ENCODE measurements at regions of chr6 and their contacts with region 1.

Region 1: GRCh38 chr6:85008296-85009009 is 244.1 kb upstream of the TBX18 start:
- DNase-seq: no peak
- ATAC-seq: peak in 1 of 8 donors; percentile 37
- H3K4me3 ChIP-seq: no peak overlapping the region
- H3K27ac ChIP-seq: no peak overlapping the region
- H3K4me1 ChIP-seq: no peaks in the 10 kb centered on the region
- H3K27me3 ChIP-seq: no peaks in the 10 kb centered on the region
- CTCF ChIP-seq: no peak

Region 2: DNA sequence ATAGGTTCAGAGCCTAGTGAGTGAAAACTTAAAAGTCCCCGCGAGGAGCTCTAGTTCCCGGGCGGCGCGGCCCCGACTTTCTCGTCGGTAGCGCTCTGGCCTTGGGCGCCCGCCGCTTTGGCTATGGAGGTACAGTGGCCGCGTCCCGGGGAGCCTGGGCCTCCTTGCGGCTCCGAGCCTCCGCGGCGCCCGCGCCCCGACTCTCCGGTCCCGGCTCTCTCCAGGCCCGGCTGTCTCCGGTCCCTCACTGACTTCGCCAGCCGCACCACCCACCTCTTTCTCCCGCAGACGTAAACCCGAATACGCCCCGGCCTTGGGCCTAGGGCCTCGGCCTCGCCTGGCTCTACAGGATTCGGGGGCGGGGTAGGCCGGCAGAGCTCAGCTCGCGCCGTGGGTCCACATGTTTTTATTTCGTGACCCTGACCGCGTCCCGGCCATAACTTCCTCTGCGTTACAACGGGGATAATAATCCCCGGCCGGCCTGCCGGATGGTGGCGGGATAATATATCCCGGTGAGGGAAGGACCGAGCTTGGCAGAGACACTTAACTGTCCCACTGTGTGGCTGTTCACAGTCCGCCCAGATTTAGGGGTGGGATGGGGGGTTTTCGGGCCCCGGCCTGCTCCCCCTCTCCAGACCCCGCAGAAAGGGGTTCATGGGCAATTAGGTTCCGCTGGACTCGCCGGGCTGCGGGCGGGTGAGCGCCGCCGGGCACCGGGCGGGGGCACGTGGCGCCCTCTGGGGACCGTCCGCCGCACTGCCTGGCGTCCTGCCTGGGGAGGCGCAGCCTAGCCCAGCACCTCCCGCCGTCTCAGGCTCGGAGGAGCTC is 234.1 kb before region 1 on chr6:
- intact Hi-C with region 1: loop called in 1 of 10 experiments (anchors 10 kb)
- DNase-seq: peak; percentile 15 to 58
- ATAC-seq: peak; percentile 70 to 91 (median 76)
- H3K4me3 ChIP-seq: peak overlapping the region; percentile 7 to 61 (median 52)
- H3K27ac ChIP-seq: peak overlapping the region in 9 of 10 donors; percentile 38 to 86 (median 73)
- H3K4me1 ChIP-seq: peaks cover 0 to 19% (median 15%) of the 10 kb centered on the region in 9 donors
- H3K27me3 ChIP-seq: peaks cover 0 to 96% (median 81%) of the 10 kb centered on the region in 7 donors
- CTCF ChIP-seq: peak; percentile 11 to 62 (median 52)

Region 3: GRCh38 chr6:85033547-85033946 is 25.1 kb after region 1 on chr6:
- intact Hi-C with region 1: no loop called
- DNase-seq: no peak
- ATAC-seq: no peak
- H3K4me3 ChIP-seq: no peak overlapping the region
- H3K27ac ChIP-seq: no peak overlapping the region
- H3K4me1 ChIP-seq: no peaks in the 10 kb centered on the region
- H3K27me3 ChIP-seq: no peaks in the 10 kb centered on the region
- CTCF ChIP-seq: no peak